ENCODE measurements at regions of chr15 and their contacts with region 1.

Region 1: GRCh38 chr15:59349680-59350420 is 22.8 kb downstream of the MYO1E start:
- DNase-seq: peak in 1 of 2 donors; percentile 46
- ATAC-seq: peak; percentile 46 to 95 (median 84)
- H3K4me3 ChIP-seq: no peak overlapping the region
- H3K27ac ChIP-seq: peak overlapping the region in 9 of 10 donors; percentile 20 to 80 (median 61)
- H3K4me1 ChIP-seq: peaks cover 0 to 77% (median 55%) of the 10 kb centered on the region in 9 donors
- H3K27me3 ChIP-seq: no peaks in the 10 kb centered on the region
- CTCF ChIP-seq: no peak

Region 2: DNA sequence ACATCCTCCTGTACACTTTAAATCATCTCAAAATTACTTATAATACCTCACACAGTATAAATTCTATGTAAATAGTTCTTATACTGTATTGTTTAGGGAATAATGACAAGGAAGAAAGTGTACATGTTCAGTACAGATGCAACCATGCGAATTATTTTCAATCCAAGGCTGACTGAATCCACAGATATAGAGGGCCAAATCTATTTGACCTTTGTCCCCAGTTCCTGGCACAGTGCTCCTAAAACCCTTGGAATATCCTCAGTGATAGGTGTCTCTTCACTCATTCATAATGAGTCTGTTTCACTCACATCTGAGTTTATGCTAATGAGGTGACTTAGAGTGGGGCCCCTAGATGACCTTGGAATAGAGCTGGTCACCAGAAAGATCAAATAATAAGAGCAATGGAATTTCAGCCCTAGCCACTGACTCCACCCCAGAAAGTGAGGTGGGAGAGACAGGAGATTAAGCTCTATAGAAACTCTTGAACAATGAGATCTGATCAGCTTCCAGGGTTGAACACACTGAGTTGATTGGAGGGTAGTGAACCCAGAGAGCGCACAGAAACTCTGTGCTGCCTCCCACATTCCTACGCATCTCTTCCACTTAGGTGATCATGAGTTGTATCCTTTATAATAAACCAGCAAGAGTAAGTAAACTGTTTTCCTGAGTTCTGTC is 665.7 kb before region 1 on chr15:
- intact Hi-C with region 1: loop called in 1 of 10 experiments (anchors 10 kb)
- DNase-seq: no peak
- ATAC-seq: no peak
- H3K4me3 ChIP-seq: no peak overlapping the region
- H3K27ac ChIP-seq: no peak overlapping the region
- H3K4me1 ChIP-seq: peaks cover 0 to 36% (median 13%) of the 10 kb centered on the region in 9 donors
- H3K27me3 ChIP-seq: no peaks in the 10 kb centered on the region
- CTCF ChIP-seq: no peak

Region 3: DNA sequence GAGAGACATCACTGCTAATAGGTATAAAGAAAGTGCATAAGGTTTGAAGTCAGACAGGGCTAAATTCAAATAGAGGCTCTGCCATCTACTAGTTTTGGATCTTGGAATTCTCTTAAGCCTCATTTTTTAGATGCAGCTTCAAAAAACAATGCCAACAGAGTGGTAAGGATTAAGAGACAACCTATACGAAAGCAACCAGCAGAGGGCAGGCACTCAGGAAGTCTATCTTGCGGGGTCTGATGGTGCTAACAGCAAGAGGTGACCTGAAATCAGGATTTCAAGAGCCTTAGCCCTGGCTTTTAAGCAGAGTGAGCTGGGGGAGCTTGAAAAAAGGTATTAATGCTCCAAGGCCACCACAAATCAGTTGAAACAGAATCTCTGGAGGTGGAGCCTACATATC is 102.5 kb before region 1 on chr15:
- intact Hi-C with region 1: loop called in 1 of 10 experiments (anchors 10 kb)
- DNase-seq: peak in 1 of 2 donors; percentile 62
- ATAC-seq: peak; percentile 72 to 94 (median 82)
- H3K4me3 ChIP-seq: no peak overlapping the region
- H3K27ac ChIP-seq: no peak overlapping the region
- H3K4me1 ChIP-seq: peaks cover 0 to 28% (median 9%) of the 10 kb centered on the region in 9 donors
- H3K27me3 ChIP-seq: no peaks in the 10 kb centered on the region
- CTCF ChIP-seq: peak; percentile 34 to 80 (median 62)

Region 4: GRCh38 chr15:59294568-59295260 is 55.1 kb before region 1 on chr15:
- intact Hi-C with region 1: loop called in 3 of 10 experiments (anchors 5 to 10 kb)
- DNase-seq: no peak
- ATAC-seq: no peak
- H3K4me3 ChIP-seq: no peak overlapping the region
- H3K27ac ChIP-seq: peak overlapping the region in 8 of 10 donors; percentile 5 to 67 (median 60)
- H3K4me1 ChIP-seq: peaks cover 7 to 89% (median 66%) of the 10 kb centered on the region in 9 donors
- H3K27me3 ChIP-seq: no peaks in the 10 kb centered on the region
- CTCF ChIP-seq: no peak

Region 5: DNA sequence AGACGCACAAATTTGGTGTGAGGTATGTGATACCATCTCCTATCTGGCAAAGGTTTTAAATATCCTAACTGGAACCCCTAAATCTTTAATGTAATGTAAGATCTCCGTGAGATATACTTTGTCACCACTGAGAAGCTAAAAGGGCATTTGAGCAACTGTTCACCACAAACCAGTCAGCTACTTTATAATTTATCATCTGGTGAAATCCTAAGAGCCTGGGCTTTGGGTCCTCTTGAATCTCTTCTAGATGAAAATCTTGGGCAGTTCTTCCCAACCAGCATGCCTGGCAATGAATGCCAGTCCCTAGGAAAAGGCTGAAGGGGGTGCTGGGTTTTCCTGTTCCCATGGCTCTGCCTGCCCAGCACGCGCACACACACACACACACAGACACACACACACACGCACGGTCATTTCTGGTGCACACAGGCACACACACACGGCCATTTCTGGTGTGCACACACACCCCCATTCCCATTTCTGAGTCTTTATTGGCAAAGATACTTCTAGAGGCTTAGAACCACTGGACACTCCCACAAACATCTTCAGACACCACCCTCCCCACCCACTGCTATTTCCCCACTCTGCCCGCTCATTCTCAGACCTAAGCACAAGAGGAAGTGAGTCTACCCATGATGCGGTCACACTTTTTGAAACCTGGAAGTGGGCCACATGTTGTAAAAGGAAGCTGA is 49.8 kb before region 1 on chr15:
- intact Hi-C with region 1: loop called in 2 of 10 experiments (anchors 10 kb)
- DNase-seq: peak; percentile 20 to 78
- ATAC-seq: peak; percentile 80 to 95 (median 88)
- H3K4me3 ChIP-seq: peak overlapping the region in 2 of 10 donors; percentile 16 to 17
- H3K27ac ChIP-seq: peak overlapping the region in 7 of 10 donors; percentile 8 to 75 (median 47)
- H3K4me1 ChIP-seq: peaks cover 7 to 76% (median 39%) of the 10 kb centered on the region in 9 donors
- H3K27me3 ChIP-seq: no peaks in the 10 kb centered on the region
- CTCF ChIP-seq: no peak

Region 6: GRCh38 chr15:59313641-59314332 is 36.1 kb before region 1 on chr15:
- intact Hi-C with region 1: loop called in 1 of 10 experiments (anchors 5 kb)
- DNase-seq: peak; percentile 57 to 63
- ATAC-seq: peak; percentile 8 to 90 (median 80)
- H3K4me3 ChIP-seq: no peak overlapping the region
- H3K27ac ChIP-seq: peak overlapping the region in 3 of 10 donors; percentile 8 to 23 (median 13)
- H3K4me1 ChIP-seq: peaks cover 10 to 55% (median 37%) of the 10 kb centered on the region in 9 donors
- H3K27me3 ChIP-seq: no peaks in the 10 kb centered on the region
- CTCF ChIP-seq: no peak

Region 7: GRCh38 chr15:59376733-59377132 is 26.9 kb after region 1 on chr15:
- intact Hi-C with region 1: no loop called
- DNase-seq: no peak
- ATAC-seq: no peak
- H3K4me3 ChIP-seq: no peak overlapping the region
- H3K27ac ChIP-seq: no peak overlapping the region
- H3K4me1 ChIP-seq: peaks cover 0 to 17% (median 8%) of the 10 kb centered on the region in 9 donors
- H3K27me3 ChIP-seq: peaks cover 0 to 18% (median 0%) of the 10 kb centered on the region in 7 donors
- CTCF ChIP-seq: peak in 5 of 9 donors; percentile 24 to 47 (median 36)

Region 8: GRCh38 chr15:59420986-59421618 is 71.3 kb after region 1 on chr15:
- intact Hi-C with region 1: no loop called
- DNase-seq: no peak
- ATAC-seq: no peak
- H3K4me3 ChIP-seq: no peak overlapping the region
- H3K27ac ChIP-seq: no peak overlapping the region
- H3K4me1 ChIP-seq: no peaks in the 10 kb centered on the region
- H3K27me3 ChIP-seq: peaks cover 0 to 16% (median 5%) of the 10 kb centered on the region in 7 donors
- CTCF ChIP-seq: no peak

Region 9: DNA sequence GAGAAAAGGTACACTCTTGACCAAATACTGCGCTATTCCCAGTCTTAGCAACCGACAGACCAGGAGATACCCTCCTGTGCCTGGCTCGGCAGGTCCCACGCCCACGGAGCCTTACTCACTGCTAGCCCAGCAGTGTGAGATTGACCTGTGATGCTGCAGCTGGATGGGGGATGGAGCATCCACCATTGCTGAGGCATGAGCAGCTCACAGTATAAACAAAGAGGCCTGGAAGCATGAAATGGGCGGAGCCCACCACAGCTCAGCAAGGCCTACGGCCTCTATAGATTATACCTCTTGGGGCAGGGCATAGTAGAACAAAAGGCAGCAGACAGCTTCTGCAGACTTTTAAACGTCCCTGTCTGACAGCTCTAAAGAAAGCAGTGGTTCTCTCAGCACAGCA is 887.6 kb after region 1 on chr15:
- intact Hi-C with region 1: no loop called
- DNase-seq: no peak
- ATAC-seq: no peak
- H3K4me3 ChIP-seq: no peak overlapping the region
- H3K27ac ChIP-seq: no peak overlapping the region
- H3K4me1 ChIP-seq: no peaks in the 10 kb centered on the region
- H3K27me3 ChIP-seq: peaks cover 0 to 38% (median 4%) of the 10 kb centered on the region in 7 donors
- CTCF ChIP-seq: no peak